ENCODE measurements at regions of chr10 and their contacts with region 1.

Region 1: GRCh38 chr10:77846718-77847630 is 79.6 kb downstream of the DLG5 start:
- DNase-seq: peak; percentile 75 to 81
- ATAC-seq: peak; percentile 71 to 84 (median 81)
- H3K4me3 ChIP-seq: no peak overlapping the region
- H3K27ac ChIP-seq: peak overlapping the region in 8 of 10 donors; percentile 11 to 58 (median 33)
- H3K4me1 ChIP-seq: peaks cover 0 to 23% (median 12%) of the 10 kb centered on the region in 9 donors
- H3K27me3 ChIP-seq: no peaks in the 10 kb centered on the region
- CTCF ChIP-seq: peak; percentile 89 to 97 (median 96)

Region 2: DNA sequence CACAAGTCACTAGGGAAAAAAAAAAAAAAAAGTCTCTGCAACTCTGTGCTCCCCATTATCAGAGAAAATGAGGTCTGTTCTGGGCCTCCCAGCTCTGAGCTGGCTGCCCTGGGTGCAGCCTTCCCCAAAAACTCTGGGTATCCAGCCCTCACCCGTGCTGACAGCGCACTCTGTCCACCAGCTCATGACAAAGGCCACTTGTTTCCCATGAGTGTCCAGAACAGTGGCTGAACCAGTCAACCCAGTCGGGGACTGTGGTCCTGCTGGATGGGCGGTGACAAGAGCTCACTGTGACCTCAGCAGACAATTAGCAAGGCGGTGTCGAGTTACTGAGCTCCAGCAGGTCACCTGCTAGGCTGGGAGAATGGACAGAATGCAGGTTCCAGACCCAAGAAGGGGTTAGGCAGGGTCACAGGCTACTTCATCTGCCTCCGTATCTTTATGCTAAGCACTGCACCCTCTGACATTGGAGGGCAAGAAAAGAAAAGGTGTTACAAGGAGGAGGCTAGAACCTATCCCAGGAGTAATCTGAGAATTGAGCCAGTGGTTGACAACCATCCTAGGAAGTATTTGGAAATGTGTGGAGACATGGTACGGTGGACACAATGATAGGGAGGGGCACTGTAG is 42.4 kb after region 1 on chr10:
- intact Hi-C with region 1: no loop called
- DNase-seq: no peak
- ATAC-seq: peak in 5 of 8 donors; percentile 36 to 71 (median 59)
- H3K4me3 ChIP-seq: no peak overlapping the region
- H3K27ac ChIP-seq: peak overlapping the region in 1 of 10 donors; percentile 7
- H3K4me1 ChIP-seq: peaks cover 7 to 48% (median 25%) of the 10 kb centered on the region in 9 donors
- H3K27me3 ChIP-seq: no peaks in the 10 kb centered on the region
- CTCF ChIP-seq: no peak

Region 3: DNA sequence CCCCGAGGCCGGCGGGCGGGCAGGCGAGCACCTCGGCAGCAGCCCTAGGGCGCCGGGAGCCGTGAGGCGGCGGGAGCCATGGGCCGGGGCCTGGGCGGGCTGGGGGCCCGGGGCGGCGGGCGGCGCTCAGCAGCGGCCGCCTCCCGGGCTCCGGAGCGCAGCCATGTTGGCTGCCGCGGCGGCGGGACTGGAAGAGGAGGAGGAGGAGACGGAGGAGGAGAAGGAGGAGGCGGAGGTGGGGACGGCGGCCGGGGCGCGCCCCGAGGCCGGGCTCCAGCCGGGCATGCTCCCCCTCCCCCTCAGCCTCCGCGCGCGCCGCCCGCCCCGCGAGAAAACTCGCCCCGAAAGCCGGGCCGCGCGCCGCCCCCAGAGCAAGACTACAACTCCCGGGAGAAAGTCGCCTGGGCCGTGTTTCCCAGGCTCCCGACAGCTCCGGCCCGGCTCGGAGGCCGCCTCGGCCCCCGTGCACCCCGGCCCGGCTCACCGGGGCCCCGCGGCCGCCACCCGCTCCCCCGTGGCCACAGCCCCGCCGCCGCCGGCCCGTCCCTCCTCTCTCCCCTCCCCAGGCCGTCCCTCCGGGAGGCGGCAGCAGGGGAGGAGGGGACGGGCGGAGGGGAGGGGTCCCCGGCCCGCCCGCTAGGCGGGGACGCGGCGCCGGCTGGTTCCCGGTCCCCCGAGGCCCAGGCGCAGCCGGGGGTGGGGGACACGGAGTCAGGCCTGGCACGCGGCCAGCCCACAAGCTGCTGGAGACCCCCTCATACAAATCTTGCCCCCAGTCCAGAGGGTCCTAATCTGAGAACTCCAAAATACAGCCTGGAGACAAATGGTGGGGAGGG is 79.8 kb after region 1 on chr10 and contains the start of gene DLG5:
- intact Hi-C with region 1: loop called in 3 of 10 experiments (anchors 5 kb)
- DNase-seq: peak; percentile 66 to 77
- ATAC-seq: peak; percentile 73 to 89 (median 82)
- H3K4me3 ChIP-seq: peak within 1 kb of the TSS; percentile 69 to 97 (median 74)
- H3K27ac ChIP-seq: peak within 1 kb of the TSS in 9 of 10 donors; percentile 34 to 79 (median 65)
- H3K4me1 ChIP-seq: peaks cover 10 to 34% (median 19%) of the 10 kb centered on the region in 9 donors
- H3K27me3 ChIP-seq: peaks cover 0 to 48% (median 0%) of the 10 kb centered on the region in 7 donors
- CTCF ChIP-seq: peak in 1 of 9 donors; percentile 22
- total RNA-seq, gene DLG5: 6.6 to 14.1 (median 11.7) TPM

Region 4: GRCh38 chr10:77970869-77971803 is 124.2 kb after region 1 on chr10:
- intact Hi-C with region 1: loop called in 3 of 10 experiments (anchors 2 to 10 kb)
- DNase-seq: peak; percentile 24 to 86
- ATAC-seq: peak; percentile 82 to 96 (median 93)
- H3K4me3 ChIP-seq: peak overlapping the region in 1 of 10 donors; percentile 25
- H3K27ac ChIP-seq: peak overlapping the region; percentile 16 to 84 (median 68)
- H3K4me1 ChIP-seq: peaks cover 0 to 28% (median 12%) of the 10 kb centered on the region in 9 donors
- H3K27me3 ChIP-seq: no peaks in the 10 kb centered on the region
- CTCF ChIP-seq: no peak

Region 5: GRCh38 chr10:77983384-77984341 is 136.7 kb after region 1 on chr10:
- intact Hi-C with region 1: loop called in 5 of 10 experiments (anchors 5 to 10 kb)
- DNase-seq: no peak
- ATAC-seq: peak in 6 of 8 donors; percentile 40 to 84 (median 62)
- H3K4me3 ChIP-seq: no peak overlapping the region
- H3K27ac ChIP-seq: peak overlapping the region in 4 of 10 donors; percentile 25 to 55 (median 37)
- H3K4me1 ChIP-seq: peaks cover 0 to 29% (median 11%) of the 10 kb centered on the region in 9 donors
- H3K27me3 ChIP-seq: no peaks in the 10 kb centered on the region
- CTCF ChIP-seq: no peak

Region 6: DNA sequence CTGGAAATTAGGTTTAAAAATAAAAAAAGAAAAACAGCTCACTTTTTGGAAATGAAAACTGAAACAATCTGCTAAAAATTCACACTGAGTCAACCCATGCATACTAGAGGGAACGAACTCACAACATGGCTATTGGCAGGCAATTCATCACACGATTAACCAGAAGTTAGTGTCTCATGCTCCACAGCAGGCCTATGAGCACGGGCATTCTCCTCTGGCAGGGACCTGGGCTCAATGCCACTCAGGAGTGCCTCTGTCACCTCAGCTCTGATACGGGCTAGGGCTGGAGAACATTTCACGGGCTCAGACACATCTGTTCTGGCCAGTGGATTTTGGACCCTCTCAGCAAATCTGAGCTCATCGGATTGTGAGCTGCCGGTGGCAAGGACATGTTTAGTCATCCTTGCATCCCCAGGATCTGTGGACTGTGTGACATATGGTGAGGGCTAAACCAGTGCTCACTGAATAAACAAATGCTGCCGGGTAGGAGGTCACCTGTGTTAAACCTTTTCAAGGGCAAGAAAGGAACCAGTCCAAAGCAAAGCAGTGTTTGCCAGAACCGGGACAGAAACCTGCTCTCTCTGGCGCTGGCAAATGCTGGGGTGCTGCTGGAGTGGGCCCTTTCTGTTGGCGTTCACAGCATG is 142.2 kb after region 1 on chr10:
- intact Hi-C with region 1: loop called in 4 of 10 experiments (anchors 5 to 10 kb)
- DNase-seq: peak; percentile 51 to 64
- ATAC-seq: peak; percentile 81 to 98 (median 96)
- H3K4me3 ChIP-seq: no peak overlapping the region
- H3K27ac ChIP-seq: peak overlapping the region in 9 of 10 donors; percentile 20 to 77 (median 63)
- H3K4me1 ChIP-seq: peaks cover 0 to 27% (median 5%) of the 10 kb centered on the region in 9 donors
- H3K27me3 ChIP-seq: no peaks in the 10 kb centered on the region
- CTCF ChIP-seq: no peak

Region 7: DNA sequence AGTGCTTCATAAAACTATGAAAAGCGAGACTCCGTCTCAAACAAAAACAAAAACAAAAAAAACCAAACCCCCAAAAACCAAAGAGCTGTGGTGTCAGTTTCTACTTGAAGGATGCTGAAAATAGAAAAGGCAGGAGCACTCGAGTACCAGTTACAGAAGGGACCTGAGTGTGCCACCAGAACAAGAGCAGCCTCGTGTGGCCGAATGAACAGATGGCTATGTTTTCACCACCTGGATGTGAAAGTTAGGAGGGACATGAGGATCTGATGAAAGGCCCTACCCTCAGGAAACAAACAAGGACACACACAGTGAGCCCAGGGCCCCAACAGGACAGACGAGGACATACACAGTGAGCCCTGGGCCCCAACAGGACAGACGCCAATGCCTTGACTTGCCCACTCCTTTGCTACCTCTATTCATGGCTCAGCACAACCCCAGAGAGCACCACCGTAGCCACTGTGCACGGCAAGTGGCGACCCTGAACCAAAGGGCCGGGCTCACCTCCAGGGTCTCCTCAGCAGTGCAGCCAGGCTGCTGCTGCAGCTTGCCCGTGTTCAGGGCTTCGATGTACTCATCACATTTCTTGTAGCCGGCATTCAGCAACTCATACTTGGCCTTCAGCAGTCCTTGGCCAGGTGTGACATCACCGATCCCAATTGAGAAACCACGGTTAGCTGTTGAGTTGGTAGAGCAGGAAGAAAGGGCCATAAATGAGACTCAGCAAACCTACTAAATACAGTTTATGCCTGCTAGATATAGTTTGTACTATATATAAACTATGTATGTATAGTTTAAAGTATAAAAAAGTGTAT is 157.4 kb after region 1 on chr10:
- intact Hi-C with region 1: loop called in 3 of 10 experiments (anchors 5 kb)
- DNase-seq: no peak
- ATAC-seq: peak in 7 of 8 donors; percentile 28 to 85 (median 64)
- H3K4me3 ChIP-seq: no peak overlapping the region
- H3K27ac ChIP-seq: no peak overlapping the region
- H3K4me1 ChIP-seq: no peaks in the 10 kb centered on the region
- H3K27me3 ChIP-seq: no peaks in the 10 kb centered on the region
- CTCF ChIP-seq: peak in 8 of 9 donors; percentile 11 to 58 (median 26)

Region 8: GRCh38 chr10:78139341-78139740 is 292.4 kb after region 1 on chr10:
- intact Hi-C with region 1: no loop called
- DNase-seq: peak in 1 of 2 donors; percentile 17
- ATAC-seq: peak in 6 of 8 donors; percentile 28 to 80 (median 68)
- H3K4me3 ChIP-seq: no peak overlapping the region
- H3K27ac ChIP-seq: no peak overlapping the region
- H3K4me1 ChIP-seq: no peaks in the 10 kb centered on the region
- H3K27me3 ChIP-seq: peaks cover 0 to 15% (median 0%) of the 10 kb centered on the region in 7 donors
- CTCF ChIP-seq: no peak

Measured in heart right ventricle (tissue), 16 donors.